ENCODE measurements at regions of chr10 and their contacts with region 1.

Region 1: DNA sequence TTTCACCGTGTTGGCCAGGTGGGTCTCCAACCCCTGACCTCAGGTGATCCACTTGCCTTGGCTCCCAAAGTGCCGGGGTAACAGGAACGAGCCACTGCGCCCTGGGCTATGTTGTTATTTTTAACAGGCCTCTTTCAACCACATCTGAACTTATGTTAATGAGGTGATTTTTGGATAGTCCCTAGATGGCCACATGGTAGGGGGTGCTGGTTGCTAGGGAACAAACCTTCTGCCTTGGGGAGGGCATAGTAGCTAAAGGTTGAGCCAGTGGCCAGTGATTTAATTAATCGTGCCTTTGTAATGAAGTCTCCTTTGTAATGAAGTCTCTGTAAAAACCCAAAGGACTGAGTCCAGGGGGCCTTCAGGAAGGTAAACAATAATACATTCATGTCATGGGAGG is 9.1 kb downstream of the COMTD1 start:
- DNase-seq: no peak
- ATAC-seq: no peak
- H3K4me3 Mint-ChIP-seq: no peak overlapping the region
- H3K27ac Mint-ChIP-seq: peak overlapping the region; percentile 22
- H3K4me1 Mint-ChIP-seq: peaks cover 46% of the 10 kb centered on the region
- H3K27me3 Mint-ChIP-seq: no peaks in the 10 kb centered on the region

Region 2: DNA sequence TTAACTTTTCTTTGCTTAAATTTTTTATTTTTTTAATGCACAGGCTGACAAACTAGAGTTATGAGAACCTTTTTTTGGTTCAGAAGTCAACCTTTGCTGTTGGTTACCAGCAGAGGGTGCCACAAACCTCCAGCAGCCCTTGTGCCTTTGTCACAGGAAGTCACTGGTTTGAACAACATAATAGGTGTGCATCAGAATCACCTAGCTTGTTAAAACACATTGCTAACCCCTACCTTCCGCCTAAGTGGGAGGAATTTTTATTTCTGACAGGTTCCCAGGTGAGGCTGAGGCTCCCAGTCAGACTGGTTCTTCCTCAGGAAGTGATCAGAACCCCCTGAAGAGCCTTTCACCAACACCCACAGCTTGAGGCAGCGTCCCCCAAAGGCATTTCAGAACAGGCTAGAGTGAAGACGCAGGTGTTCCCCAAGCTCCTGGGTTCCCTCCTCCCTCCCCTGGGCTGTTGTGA is 38.7 kb before region 1 on chr10:
- CTCF ChIA-PET with region 1: interaction called, 54 read pairs
- DNase-seq: peak; percentile 82
- ATAC-seq: peak; percentile 90
- H3K4me3 Mint-ChIP-seq: no peak overlapping the region
- H3K27ac Mint-ChIP-seq: peak overlapping the region; percentile 67
- H3K4me1 Mint-ChIP-seq: peaks cover 13% of the 10 kb centered on the region
- H3K27me3 Mint-ChIP-seq: no peaks in the 10 kb centered on the region

Region 3: DNA sequence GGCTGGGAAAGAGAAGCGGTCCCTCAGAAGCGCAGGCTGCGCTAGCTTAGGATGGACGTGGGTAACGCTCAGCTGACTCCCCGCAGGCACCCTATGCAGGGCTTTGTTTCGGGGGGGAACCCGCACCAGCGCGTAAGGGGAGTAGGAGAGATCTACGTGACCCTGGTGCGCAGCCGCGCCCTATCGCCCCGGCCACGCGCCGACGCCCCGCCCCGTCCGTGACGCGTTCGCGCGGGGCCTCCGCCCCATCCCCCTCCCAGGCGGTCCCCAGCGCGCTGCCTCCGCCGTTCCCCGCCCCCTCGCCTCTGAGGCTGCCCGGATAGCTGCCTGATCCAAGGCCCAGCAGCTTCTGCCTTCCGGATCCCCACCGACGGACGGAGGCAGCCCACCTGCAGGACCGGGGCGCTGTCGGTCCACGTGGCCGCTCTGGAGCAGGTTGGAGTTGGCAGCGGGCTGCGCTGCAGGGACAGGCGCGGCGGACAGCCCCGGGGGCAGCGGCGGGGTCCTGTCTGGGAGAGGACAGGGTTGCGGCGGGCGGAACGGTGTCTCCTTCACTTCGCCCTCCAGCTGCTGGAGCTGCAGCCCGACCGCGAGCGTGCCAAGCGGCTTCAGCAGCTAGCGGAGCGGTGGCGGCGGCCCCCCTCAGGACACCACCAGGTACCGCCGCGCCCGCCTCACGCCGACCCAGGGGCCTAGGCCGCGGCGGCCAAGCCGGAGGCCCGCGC is 16.2 kb before region 1 on chr10 and contains the start of gene VDAC2:
- CTCF ChIA-PET with region 1: interaction called, 31 read pairs
- DNase-seq: peak; percentile 94
- ATAC-seq: peak; percentile 92
- H3K4me3 Mint-ChIP-seq: peak within 1 kb of the TSS; percentile 97
- H3K27ac Mint-ChIP-seq: peak within 1 kb of the TSS; percentile 100
- H3K4me1 Mint-ChIP-seq: peaks cover 44% of the 10 kb centered on the region
- H3K27me3 Mint-ChIP-seq: no peaks in the 10 kb centered on the region
- total RNA-seq, gene VDAC2: 136 to 156 TPM

Measured in activated CD8-positive, alpha-beta memory T cell treated with anti-CD3 and anti-CD28 coated beads, Interleukin-2, amount 10 ng/mL, durations not matched to agents 7 days and 5 days (primary cell).